GM10248 (cell line): ENCODE measurements at regions of chr1 and their contacts with region 1.

Region 1: GRCh38 chr1:154669464-154670282 is 61.7 kb upstream of the ADAR start:
- DNase-seq: peak; percentile 86
- CTCF ChIP-seq: peak; percentile 97

Region 2: DNA sequence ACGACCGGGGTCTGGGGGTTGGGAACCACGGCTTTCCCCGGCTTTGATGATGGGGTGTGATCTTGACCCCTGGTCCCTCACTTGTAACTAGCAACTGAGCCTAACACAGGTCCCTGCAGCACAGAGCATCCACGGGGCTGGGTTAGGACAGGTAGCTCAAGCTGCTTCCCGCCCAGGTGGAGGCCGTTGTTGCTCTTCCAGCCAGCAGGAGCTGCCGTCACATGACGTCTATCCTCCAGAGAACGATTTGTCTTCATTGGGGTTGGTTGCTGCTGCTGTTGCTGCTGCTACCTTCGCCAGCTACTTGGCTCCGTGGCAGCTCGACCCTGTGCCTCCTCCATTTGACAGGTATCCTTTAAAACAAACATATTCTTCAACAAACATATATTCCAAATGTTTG is 12.6 kb after region 1 on chr1:
- CTCF ChIA-PET with region 1: interaction called, 57 read pairs
- POLR2A ChIA-PET with region 1: no interaction called
- DNase-seq: no peak
- CTCF ChIP-seq: no peak

Region 3: GRCh38 chr1:154870115-154870571 is 200.5 kb after region 1 on chr1 and contains the start of gene KCNN3:
- CTCF ChIA-PET with region 1: interaction called, 53 read pairs
- POLR2A ChIA-PET with region 1: no interaction called
- DNase-seq: peak; percentile 98
- CTCF ChIP-seq: no peak

Region 4: DNA sequence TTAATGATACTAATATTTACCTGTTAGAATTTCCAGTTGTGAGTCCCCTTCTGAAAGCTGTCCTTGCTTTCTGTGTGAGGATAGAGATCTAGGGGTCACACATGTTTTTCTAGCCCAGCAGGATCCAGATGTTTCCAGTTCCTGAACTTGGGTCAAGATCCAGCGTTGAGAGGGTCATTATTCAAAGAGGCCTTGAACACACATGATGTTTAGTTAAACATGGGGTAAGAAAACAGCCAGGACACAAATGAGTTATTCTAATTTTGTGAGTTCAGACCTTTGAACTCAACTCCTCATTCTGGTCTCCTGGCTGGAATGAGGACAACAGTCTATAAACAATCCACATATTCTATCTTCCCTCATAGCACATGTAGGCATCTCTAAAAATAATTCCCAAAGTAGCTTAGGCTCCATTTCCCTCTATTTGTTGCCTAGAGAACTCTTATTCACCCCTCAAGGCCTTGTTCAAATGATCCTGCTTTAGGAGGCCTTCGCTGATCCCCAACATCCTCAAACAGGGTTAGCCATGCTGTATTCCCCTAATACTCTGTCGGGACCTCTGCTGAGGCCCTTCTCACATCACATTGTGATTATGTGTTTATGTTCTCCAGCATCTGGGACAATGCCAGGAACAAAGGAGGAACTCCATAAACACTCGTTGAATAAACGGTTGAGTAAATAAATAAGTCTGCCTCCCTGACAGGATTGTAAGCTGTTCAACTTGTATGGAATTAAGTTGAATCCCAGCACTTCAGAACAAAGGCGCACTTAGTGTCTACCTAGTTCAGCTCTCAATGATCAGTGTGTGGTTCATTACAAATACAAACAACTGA is 215.4 kb after region 1 on chr1:
- CTCF ChIA-PET with region 1: interaction called, 31 read pairs
- POLR2A ChIA-PET with region 1: no interaction called
- DNase-seq: no peak
- CTCF ChIP-seq: no peak